ENCODE measurements at regions of chr11 and their contacts with region 1.

Region 1: DNA sequence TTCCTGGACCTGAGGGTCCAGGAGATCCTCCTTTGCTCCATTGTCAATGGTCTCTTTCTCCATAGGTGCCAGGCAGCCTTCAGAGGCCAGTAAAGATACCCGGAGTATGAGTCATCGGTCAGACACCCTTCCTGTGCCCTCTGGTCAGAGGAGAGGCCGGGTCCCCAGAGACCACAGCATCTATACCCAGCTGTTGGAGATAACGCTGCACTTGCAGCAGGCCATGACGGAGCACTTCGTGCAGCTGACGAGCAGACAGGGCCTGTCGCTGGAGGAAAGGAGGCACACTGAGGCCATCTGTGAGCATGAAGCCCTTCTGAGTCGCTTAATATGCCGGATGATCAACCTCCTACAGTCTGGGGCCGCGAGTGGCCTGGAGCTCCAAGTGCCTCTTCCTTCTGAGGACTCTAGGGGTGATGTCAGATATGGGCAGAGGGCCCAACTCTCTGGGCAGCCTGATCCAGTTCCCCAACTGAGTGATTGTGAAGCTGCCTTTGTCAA is at the start of gene ACCSL:
- DNase-seq: no peak
- H3K4me3 ChIP-seq: no peak within 1 kb of the TSS
- H3K4me1 ChIP-seq: no peaks in the 10 kb centered on the region
- H3K27me3 ChIP-seq: peaks cover 3% of the 10 kb centered on the region; the same call in 1 of the 2 replicates

Region 2: GRCh38 chr11:43895601-43896000 is 152.4 kb before region 1 on chr11:
- in situ Hi-C with region 1: loop called (anchors 10 kb)
- DNase-seq: no peak
- H3K4me3 ChIP-seq: no peak overlapping the region
- H3K4me1 ChIP-seq: no peaks in the 10 kb centered on the region
- H3K27me3 ChIP-seq: no peaks in the 10 kb centered on the region

Region 3: GRCh38 chr11:44351898-44352498 is 304.0 kb after region 1 on chr11:
- in situ Hi-C with region 1: no loop called
- DNase-seq: no peak
- H3K4me3 ChIP-seq: no peak overlapping the region
- H3K4me1 ChIP-seq: no peaks in the 10 kb centered on the region
- H3K27me3 ChIP-seq: no peaks in the 10 kb centered on the region